ENCODE measurements at regions of chr9 and their contacts with region 1.

Region 1: GRCh38 chr9:122923947-122924346 is 7.4 kb downstream of the ZBTB26 start:
- DNase-seq: no peak
- H3K4me3 ChIP-seq: no peak overlapping the region
- H3K27ac ChIP-seq: no peak overlapping the region
- H3K4me1 ChIP-seq: no peaks in the 10 kb centered on the region
- H3K27me3 ChIP-seq: no peaks in the 10 kb centered on the region
- CTCF ChIP-seq: no peak

Region 2: DNA sequence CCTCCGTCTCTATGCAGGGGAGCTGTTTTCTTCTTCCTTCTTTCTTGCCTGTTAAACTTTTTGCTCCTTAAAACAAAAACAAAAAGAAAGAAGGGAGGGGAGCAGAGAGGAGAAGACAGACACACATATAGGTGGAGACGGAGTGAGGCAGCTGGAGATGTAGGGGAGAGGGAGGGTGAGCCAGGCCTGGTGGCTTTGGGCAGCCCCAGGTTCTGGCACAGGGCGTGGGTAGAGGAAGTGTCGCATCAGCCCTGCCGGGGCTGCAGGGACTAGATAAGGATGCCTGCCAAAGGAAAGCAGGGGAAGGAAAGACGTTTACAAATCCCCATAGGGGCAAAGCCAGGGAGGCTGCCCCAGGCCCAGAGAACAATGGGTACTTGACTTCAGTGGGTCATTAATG is 591.9 kb before region 1 on chr9:
- CTCF ChIA-PET with region 1: interaction called, 12 read pairs
- dilution Hi-C with region 1: no loop called
- in situ Hi-C with region 1: no loop called
- intact Hi-C with region 1: no loop called
- DNase-seq: no peak
- H3K4me3 ChIP-seq: no peak overlapping the region
- H3K27ac ChIP-seq: no peak overlapping the region
- H3K4me1 ChIP-seq: no peaks in the 10 kb centered on the region
- H3K27me3 ChIP-seq: no peaks in the 10 kb centered on the region
- CTCF ChIP-seq: no peak